ENCODE measurements at regions of chr4 and their contacts with region 1.

Region 1: GRCh38 chr4:53015681-53016080 is 153.6 kb downstream of the RASL11B start:
- DNase-seq: peak in 2 of 5 donors; percentile 19 to 36
- ATAC-seq: peak in 1 of 4 donors; percentile 35
- H3K4me3 ChIP-seq: no peak overlapping the region
- H3K27ac ChIP-seq: no peak overlapping the region
- H3K4me1 ChIP-seq: peaks cover 3 to 60% (median 42%) of the 10 kb centered on the region in 12 donors
- H3K27me3 ChIP-seq: no peaks in the 10 kb centered on the region
- CTCF ChIP-seq: peak; percentile 51 to 82 (median 72)
- POLR2A ChIP-seq: no peak

Region 2: GRCh38 chr4:53132132-53132896 is 116.6 kb after region 1 on chr4:
- intact Hi-C with region 1: loop called in 2 of 10 experiments (anchors 10 kb)
- DNase-seq: no peak
- ATAC-seq: peak in 1 of 4 donors; percentile 22
- H3K4me3 ChIP-seq: no peak overlapping the region
- H3K27ac ChIP-seq: peak overlapping the region in 5 of 12 donors; percentile 9 to 33 (median 22)
- H3K4me1 ChIP-seq: peaks cover 7 to 53% (median 33%) of the 10 kb centered on the region in 12 donors
- H3K27me3 ChIP-seq: no peaks in the 10 kb centered on the region
- CTCF ChIP-seq: no peak
- POLR2A ChIP-seq: no peak

Region 3: GRCh38 chr4:53313510-53313909 is 297.8 kb after region 1 on chr4:
- intact Hi-C with region 1: loop called in 1 of 10 experiments (anchors 10 kb)
- DNase-seq: no peak
- ATAC-seq: no peak
- H3K4me3 ChIP-seq: no peak overlapping the region
- H3K27ac ChIP-seq: no peak overlapping the region
- H3K4me1 ChIP-seq: no peaks in the 10 kb centered on the region
- H3K27me3 ChIP-seq: no peaks in the 10 kb centered on the region
- CTCF ChIP-seq: peak in 3 of 12 donors; percentile 13 to 23 (median 14)
- POLR2A ChIP-seq: no peak

Region 4: GRCh38 chr4:53377319-53378170 is 361.9 kb after region 1 on chr4 and contains the start of gene FIP1L1:
- intact Hi-C with region 1: loop called in 6 of 10 experiments (anchors 5 to 10 kb)
- DNase-seq: peak; percentile 93 to 98 (median 96)
- ATAC-seq: peak; percentile 99 to 100 (median 100)
- H3K4me3 ChIP-seq: peak within 1 kb of the TSS; percentile 50 to 97 (median 88)
- H3K27ac ChIP-seq: peak within 1 kb of the TSS; percentile 73 to 94 (median 90)
- H3K4me1 ChIP-seq: peaks cover 0 to 26% (median 20%) of the 10 kb centered on the region in 12 donors
- H3K27me3 ChIP-seq: no peaks in the 10 kb centered on the region
- CTCF ChIP-seq: no peak
- POLR2A ChIP-seq: peak in 1 of 2 donors; percentile 77
- total RNA-seq, gene FIP1L1: 23.5 to 46.2 (median 32.8) TPM

Region 5: GRCh38 chr4:54228056-54228527 is 1212.4 kb after region 1 on chr4:
- intact Hi-C with region 1: loop called (anchors 5 to 10 kb)
- DNase-seq: peak; percentile 74 to 86 (median 77)
- ATAC-seq: peak; percentile 63 to 74 (median 70)
- H3K4me3 ChIP-seq: peak overlapping the region in 11 of 12 donors; percentile 26 to 80 (median 53)
- H3K27ac ChIP-seq: peak overlapping the region in 10 of 12 donors; percentile 1 to 89 (median 68)
- H3K4me1 ChIP-seq: peaks cover 6 to 66% (median 53%) of the 10 kb centered on the region in 12 donors
- H3K27me3 ChIP-seq: peaks cover 48 to 98% (median 92%) of the 10 kb centered on the region in 9 donors
- CTCF ChIP-seq: peak; percentile 50 to 81 (median 74)
- POLR2A ChIP-seq: no peak

Measured in heart left ventricle (tissue), 16 donors.